Panc1 (cell line): ENCODE measurements at regions of chr2 and their contacts with region 1.

Region 1: DNA sequence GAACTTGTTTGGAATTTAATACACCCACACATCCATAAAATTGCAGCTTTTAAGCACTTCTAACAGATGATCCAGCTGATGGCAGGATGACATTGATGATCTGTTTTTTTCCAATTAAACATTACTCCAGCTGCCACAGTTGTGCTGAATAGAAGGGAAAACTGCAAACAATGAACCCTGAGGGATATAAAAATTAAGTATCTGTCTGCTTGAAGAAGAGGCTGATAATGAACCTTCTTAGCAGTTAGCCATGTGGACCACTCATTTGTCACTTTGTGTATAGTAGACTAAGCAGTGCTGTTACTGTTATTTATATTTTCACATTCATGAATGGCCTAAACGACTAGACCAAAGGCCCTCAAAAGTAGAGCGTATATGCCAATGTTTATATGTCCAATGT is 1201.0 kb upstream of the LRRTM1 start:
- DNase-seq: no peak
- ATAC-seq: no peak
- H3K4me3 ChIP-seq: no peak overlapping the region
- H3K27ac ChIP-seq: no peak overlapping the region
- H3K4me1 ChIP-seq: no peaks in the 10 kb centered on the region
- H3K27me3 ChIP-seq: no peaks in the 10 kb centered on the region
- CTCF ChIP-seq: no peak

Region 2: GRCh38 chr2:80687524-80687923 is 818.1 kb before region 1 on chr2:
- CTCF ChIA-PET with region 1: no interaction called
- POLR2A ChIA-PET with region 1: no interaction called
- in situ Hi-C with region 1: no loop called
- intact Hi-C with region 1: loop called (anchors 10 kb)
- DNase-seq: no peak
- ATAC-seq: no peak
- H3K4me3 ChIP-seq: no peak overlapping the region
- H3K27ac ChIP-seq: no peak overlapping the region
- H3K4me1 ChIP-seq: no peaks in the 10 kb centered on the region
- H3K27me3 ChIP-seq: no peaks in the 10 kb centered on the region
- CTCF ChIP-seq: no peak